ENCODE measurements at regions of chr20 and their contacts with region 1.

Region 1: DNA sequence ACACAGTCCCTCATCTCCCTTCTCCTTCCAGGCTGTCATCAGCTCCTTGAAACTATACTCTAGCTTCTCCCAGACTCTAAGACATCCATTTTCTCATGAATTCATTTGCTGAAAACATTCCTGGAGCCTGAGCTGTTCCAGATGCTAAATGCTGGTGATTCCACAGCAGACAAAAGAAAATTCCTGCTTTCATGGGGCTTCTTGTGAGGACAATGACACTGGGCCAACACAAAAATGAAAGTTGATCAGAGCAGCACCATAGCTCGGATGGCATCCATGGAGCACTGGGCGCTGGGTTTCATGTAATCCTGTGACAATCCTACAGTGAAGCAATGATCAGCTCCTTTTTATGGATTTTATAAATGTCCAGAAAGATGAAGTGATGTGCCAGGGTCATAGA is 47.4 kb upstream of the STX16 start:
- DNase-seq: no peak
- H3K4me3 ChIP-seq: no peak overlapping the region
- H3K27ac ChIP-seq: no peak overlapping the region
- H3K4me1 ChIP-seq: peaks cover 3% of the 10 kb centered on the region
- H3K27me3 ChIP-seq: no peaks in the 10 kb centered on the region
- CTCF ChIP-seq: no peak
- POLR2A ChIP-seq: no peak

Region 2: DNA sequence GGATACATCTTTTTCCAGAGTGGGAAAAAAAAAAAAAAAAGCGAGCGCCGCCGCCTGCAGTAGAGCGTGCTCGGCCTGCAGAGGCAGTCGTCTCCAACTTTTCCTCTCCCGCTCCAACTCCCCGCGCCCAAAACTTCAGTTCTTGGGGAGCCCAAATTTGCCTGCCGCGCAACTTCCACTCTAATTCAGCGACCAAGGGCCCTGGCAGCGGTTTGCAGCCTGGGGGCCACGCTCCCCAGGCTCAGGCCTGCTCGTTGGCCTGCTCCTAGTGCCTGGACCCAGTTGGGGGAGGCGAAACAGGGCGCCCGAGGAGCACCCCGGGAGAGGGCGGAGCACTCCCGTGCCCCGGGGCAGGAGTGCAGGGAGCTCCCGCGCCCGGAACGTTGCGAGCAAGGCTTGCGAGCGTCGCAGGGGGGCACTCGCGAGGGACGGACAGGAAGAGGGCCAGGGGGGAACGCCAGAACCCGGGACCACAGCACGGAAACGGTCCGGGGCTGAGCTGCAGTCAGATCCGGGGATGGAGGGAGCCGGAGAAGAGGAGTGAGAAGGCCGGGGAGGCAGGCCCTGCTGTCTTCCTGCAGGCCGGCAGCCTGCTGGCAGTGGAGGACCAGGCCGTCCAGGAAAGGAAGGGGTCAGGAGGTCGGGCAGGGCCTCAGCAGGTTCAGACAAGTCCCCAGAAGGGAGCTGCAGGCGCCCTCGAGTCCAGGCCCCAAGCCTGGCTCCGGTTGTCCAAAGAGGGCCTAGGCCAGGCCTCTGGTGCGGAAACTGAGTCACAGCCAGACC is 47.2 kb after region 1 on chr20 and contains the start of gene STX16:
- intact Hi-C with region 1: loop called (anchors 10 kb)
- DNase-seq: peak; percentile 91
- H3K4me3 ChIP-seq: peak within 1 kb of the TSS; percentile 93 to 98
- H3K27ac ChIP-seq: peak within 1 kb of the TSS; percentile 90 to 93
- H3K4me1 ChIP-seq: peaks cover 10% of the 10 kb centered on the region
- H3K27me3 ChIP-seq: no peaks in the 10 kb centered on the region
- CTCF ChIP-seq: peak; percentile 29 to 69 (median 59)
- POLR2A ChIP-seq: no peak
- total RNA-seq, gene STX16: 107 to 124 TPM

Measured in testis (tissue), 5 donors.